ENCODE measurements at regions of chr7 and their contacts with region 1.

Region 1: DNA sequence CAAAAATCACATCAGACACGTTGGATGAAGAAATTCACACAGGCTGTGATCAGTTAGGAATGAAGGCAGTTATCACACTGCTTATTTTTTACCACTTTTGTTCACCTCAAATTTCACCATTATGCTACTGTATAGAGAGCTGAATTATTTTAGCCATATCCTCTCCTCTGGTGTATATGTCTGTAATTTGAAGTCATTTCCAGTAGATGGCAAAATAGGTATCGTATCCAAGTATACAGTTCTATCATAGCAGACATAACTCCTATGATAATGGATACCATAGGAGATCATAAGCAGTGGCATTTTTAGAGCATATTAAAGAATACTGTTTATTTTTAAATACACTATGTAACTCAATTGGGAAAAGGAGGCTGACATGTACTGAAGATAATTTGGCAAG is 909.7 kb downstream of the DNAJB9 start:
- DNase-seq: no peak
- ATAC-seq: peak; percentile 35; the same call in 1 of the 3 replicates
- H3K4me3 ChIP-seq: no peak overlapping the region
- H3K27ac ChIP-seq: no peak overlapping the region
- H3K4me1 ChIP-seq: no peaks in the 10 kb centered on the region
- H3K27me3 ChIP-seq: no peaks in the 10 kb centered on the region
- CTCF ChIP-seq: no peak; a peak in 1 of 6 replicates
- EP300 ChIP-seq: no peak
- POLR2A ChIP-seq: no peak
- RAD21 ChIP-seq: peak; percentile 10; the same call in 1 of the 2 replicates

Region 2: GRCh38 chr7:109522585-109522984 is 43.2 kb after region 1 on chr7:
- CTCF ChIA-PET with region 1: no interaction called
- POLR2A ChIA-PET with region 1: no interaction called
- RAD21 ChIA-PET with region 1: interaction called, 5 read pairs
- SMC1A ChIA-PET with region 1: interaction called, 21 read pairs
- in situ Hi-C with region 1: no loop called
- intact Hi-C with region 1: no loop called
- DNase-seq: no peak
- ATAC-seq: no peak
- H3K4me3 ChIP-seq: no peak overlapping the region
- H3K27ac ChIP-seq: no peak overlapping the region
- H3K4me1 ChIP-seq: no peaks in the 10 kb centered on the region
- H3K27me3 ChIP-seq: no peaks in the 10 kb centered on the region
- CTCF ChIP-seq: no peak
- EP300 ChIP-seq: no peak
- POLR2A ChIP-seq: no peak
- RAD21 ChIP-seq: no peak

Region 3: GRCh38 chr7:109529712-109530111 is 50.3 kb after region 1 on chr7:
- CTCF ChIA-PET with region 1: interaction called, 6 read pairs
- POLR2A ChIA-PET with region 1: no interaction called
- RAD21 ChIA-PET with region 1: interaction called, 5 read pairs
- SMC1A ChIA-PET with region 1: interaction called, 10 read pairs
- in situ Hi-C with region 1: no loop called
- intact Hi-C with region 1: no loop called
- DNase-seq: no peak
- ATAC-seq: peak; percentile 66
- H3K4me3 ChIP-seq: no peak overlapping the region
- H3K27ac ChIP-seq: no peak overlapping the region
- H3K4me1 ChIP-seq: no peaks in the 10 kb centered on the region
- H3K27me3 ChIP-seq: no peaks in the 10 kb centered on the region
- CTCF ChIP-seq: no peak
- EP300 ChIP-seq: no peak
- POLR2A ChIP-seq: no peak
- RAD21 ChIP-seq: no peak

Region 4: DNA sequence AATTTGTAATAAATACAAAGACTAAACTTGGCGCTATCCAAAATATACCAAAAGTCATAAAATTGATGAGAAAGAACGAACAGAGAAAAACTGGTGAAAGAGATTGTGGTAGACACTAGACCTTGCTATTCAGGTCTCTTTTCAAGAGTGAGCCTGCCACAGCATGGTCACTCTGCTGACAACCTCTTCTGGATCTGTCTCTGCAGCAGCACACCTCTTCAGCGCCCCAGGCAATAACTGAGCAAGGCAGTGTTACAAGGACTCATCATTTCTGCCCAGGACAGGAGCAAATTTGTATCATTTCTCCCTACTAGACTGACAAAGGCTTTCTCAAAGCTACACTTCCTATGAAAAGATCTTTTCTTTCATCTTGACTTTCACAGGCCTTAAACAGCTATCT is 66.3 kb after region 1 on chr7:
- CTCF ChIA-PET with region 1: interaction called, 7 read pairs
- POLR2A ChIA-PET with region 1: no interaction called
- RAD21 ChIA-PET with region 1: interaction called, 5 read pairs
- SMC1A ChIA-PET with region 1: interaction called, 11 read pairs
- in situ Hi-C with region 1: no loop called
- intact Hi-C with region 1: no loop called
- DNase-seq: no peak
- ATAC-seq: no peak
- H3K4me3 ChIP-seq: no peak overlapping the region
- H3K27ac ChIP-seq: no peak overlapping the region
- H3K4me1 ChIP-seq: no peaks in the 10 kb centered on the region
- H3K27me3 ChIP-seq: no peaks in the 10 kb centered on the region
- CTCF ChIP-seq: no peak
- EP300 ChIP-seq: no peak
- POLR2A ChIP-seq: no peak
- RAD21 ChIP-seq: no peak